ENCODE measurements at regions of chr7 and their contacts with region 1.

Region 1: GRCh38 chr7:98251841-98252639 is at the start of gene TECPR1:
- DNase-seq: peak; percentile 81 to 93 (median 89)
- ATAC-seq: peak; percentile 90
- H3K4me3 ChIP-seq: peak within 1 kb of the TSS; percentile 91
- H3K4me3 Mint-ChIP-seq: peak within 1 kb of the TSS; percentile 88 to 98 (median 94)
- H3K27ac ChIP-seq: peak within 1 kb of the TSS; percentile 83
- H3K27ac Mint-ChIP-seq: peak within 1 kb of the TSS; percentile 90 to 100 (median 99)
- H3K4me1 ChIP-seq: peaks cover 38 to 40% of the 10 kb centered on the region in 2 donors
- H3K4me1 Mint-ChIP-seq: peaks cover 41 to 78% (median 65%) of the 10 kb centered on the region in 7 donors
- H3K27me3 ChIP-seq: no peaks in the 10 kb centered on the region
- H3K27me3 Mint-ChIP-seq: no peaks in the 10 kb centered on the region
- total RNA-seq, gene TECPR1: 82.4 to 203 (median 134) TPM

Region 2: DNA sequence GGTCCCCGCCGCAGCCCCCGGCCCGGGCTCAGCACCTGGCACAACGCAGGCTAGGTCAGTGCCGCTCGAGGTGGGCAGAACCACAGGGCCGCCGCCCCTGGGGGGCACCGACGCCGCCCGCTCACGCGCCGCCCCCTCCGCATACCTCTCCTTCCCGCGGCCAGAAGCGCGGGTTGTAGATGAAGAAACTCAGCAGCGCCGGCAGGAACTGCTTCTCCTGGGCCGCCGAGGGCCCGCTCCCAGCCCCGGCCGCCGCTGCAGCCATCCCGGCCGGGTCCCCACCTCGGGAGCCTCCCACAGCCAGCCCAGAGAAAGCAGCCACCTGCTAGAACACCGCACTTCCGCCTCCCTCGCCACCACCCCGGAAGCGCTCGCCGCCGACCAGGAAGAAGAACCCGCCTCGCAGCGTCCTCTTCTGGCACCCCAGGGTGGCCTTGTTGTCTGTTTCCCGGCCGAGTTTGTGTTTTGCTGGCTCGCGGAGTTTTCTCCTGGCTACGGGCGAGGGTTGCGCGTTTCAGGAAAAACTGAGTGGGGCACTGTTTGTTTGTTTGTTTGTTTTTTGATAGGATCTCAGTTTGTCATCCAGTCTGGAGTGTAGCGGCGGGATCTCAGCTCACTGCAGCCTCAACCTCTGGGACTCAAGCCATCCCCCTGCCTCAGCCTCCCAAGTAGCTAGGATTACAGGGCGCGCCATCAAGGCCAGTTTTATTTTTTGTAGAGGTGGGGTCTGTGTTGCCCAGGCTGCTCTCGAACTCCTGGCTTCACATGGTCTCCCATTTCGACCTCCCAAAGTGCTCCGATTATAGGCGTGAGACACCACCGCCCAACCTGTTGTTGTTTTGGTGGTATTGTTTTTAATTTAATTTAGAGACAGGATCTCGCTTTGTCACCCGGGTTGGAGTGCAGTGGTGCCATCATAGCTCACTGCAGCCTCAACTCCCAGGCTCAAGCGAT is 279.8 kb before region 1 on chr7:
- CTCF ChIA-PET with region 1: no interaction called
- POLR2A ChIA-PET with region 1: interaction called, 3 read pairs
- intact Hi-C with region 1: loop called (anchors 2 to 5 kb)
- DNase-seq: peak; percentile 68 to 86 (median 83)
- ATAC-seq: peak; percentile 94
- H3K4me3 ChIP-seq: peak overlapping the region; percentile 87
- H3K4me3 Mint-ChIP-seq: peak overlapping the region; percentile 90 to 98 (median 96)
- H3K27ac ChIP-seq: peak overlapping the region; percentile 84
- H3K27ac Mint-ChIP-seq: peak overlapping the region; percentile 94 to 97 (median 96)
- H3K4me1 ChIP-seq: peaks cover 10% of the 10 kb centered on the region in 2 donors
- H3K4me1 Mint-ChIP-seq: peaks cover 5 to 37% (median 17%) of the 10 kb centered on the region in 7 donors
- H3K27me3 ChIP-seq: no peaks in the 10 kb centered on the region
- H3K27me3 Mint-ChIP-seq: peaks cover 0 to 3% (median 0%) of the 10 kb centered on the region in 5 donors

Region 3: DNA sequence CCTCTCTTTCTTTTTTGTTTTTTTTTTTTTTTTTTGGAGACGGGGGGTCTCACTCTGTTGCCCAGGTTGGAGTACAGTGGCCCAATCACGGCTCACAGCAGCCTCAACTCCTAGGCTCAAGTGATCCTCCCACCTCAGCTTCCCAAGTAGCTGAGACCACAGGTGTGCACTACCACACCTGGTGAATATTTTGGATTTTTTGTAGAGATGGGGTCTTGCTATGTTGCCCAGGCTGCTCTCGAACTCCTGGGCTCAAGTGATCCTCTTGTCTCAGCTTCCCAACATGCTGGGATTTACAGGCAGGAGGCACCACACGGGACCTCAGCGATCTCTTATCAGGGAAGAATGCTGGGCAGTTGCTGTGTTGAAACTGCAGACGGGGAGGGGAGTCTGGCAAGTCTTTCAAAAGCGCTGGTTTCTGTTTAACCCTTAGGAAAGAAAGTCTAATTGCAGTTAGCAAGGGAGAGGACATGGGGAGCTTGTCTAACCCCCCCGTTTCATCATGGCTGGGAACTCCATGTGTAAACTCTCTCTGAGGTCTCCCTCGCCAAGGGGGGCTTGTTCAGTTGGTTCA is 185.0 kb before region 1 on chr7:
- CTCF ChIA-PET with region 1: no interaction called
- POLR2A ChIA-PET with region 1: no interaction called
- intact Hi-C with region 1: no loop called
- DNase-seq: no peak
- ATAC-seq: no peak
- H3K4me3 ChIP-seq: no peak overlapping the region
- H3K4me3 Mint-ChIP-seq: no peak overlapping the region
- H3K27ac ChIP-seq: no peak overlapping the region
- H3K27ac Mint-ChIP-seq: no peak overlapping the region
- H3K4me1 ChIP-seq: no peaks in the 10 kb centered on the region
- H3K4me1 Mint-ChIP-seq: no peaks in the 10 kb centered on the region
- H3K27me3 ChIP-seq: no peaks in the 10 kb centered on the region
- H3K27me3 Mint-ChIP-seq: peaks cover 0 to 22% (median 20%) of the 10 kb centered on the region in 5 donors

Region 4: GRCh38 chr7:98106647-98107445 is 145.2 kb before region 1 on chr7 and contains the start of gene LMTK2:
- CTCF ChIA-PET with region 1: interaction called, 3 read pairs
- POLR2A ChIA-PET with region 1: interaction called, 5 read pairs
- intact Hi-C with region 1: loop called (anchors 1 kb)
- DNase-seq: peak; percentile 92 to 100 (median 97)
- ATAC-seq: peak; percentile 100
- H3K4me3 ChIP-seq: peak within 1 kb of the TSS; percentile 66
- H3K4me3 Mint-ChIP-seq: peak within 1 kb of the TSS; percentile 90 to 99 (median 96)
- H3K27ac ChIP-seq: peak within 1 kb of the TSS; percentile 92
- H3K27ac Mint-ChIP-seq: peak within 1 kb of the TSS; percentile 22 to 97 (median 89)
- H3K4me1 ChIP-seq: peaks cover 10 to 26% of the 10 kb centered on the region in 2 donors
- H3K4me1 Mint-ChIP-seq: peaks cover 23 to 51% (median 48%) of the 10 kb centered on the region in 7 donors
- H3K27me3 ChIP-seq: no peaks in the 10 kb centered on the region
- H3K27me3 Mint-ChIP-seq: peaks cover 0 to 12% (median 7%) of the 10 kb centered on the region in 5 donors
- total RNA-seq, gene LMTK2: 13.2 to 29.1 (median 25.9) TPM

Region 5: GRCh38 chr7:98211221-98211675 is 40.8 kb before region 1 on chr7 and contains the start of gene BHLHA15:
- CTCF ChIA-PET with region 1: interaction called, 3 read pairs
- POLR2A ChIA-PET with region 1: interaction called, 14 read pairs
- intact Hi-C with region 1: loop called in 1 of 2 experiments (anchors 2 kb)
- DNase-seq: peak in 1 of 9 donors; percentile 48
- ATAC-seq: no peak
- H3K4me3 ChIP-seq: no peak within 1 kb of the TSS
- H3K4me3 Mint-ChIP-seq: peak within 1 kb of the TSS; percentile 48 to 79 (median 64)
- H3K27ac ChIP-seq: no peak within 1 kb of the TSS
- H3K27ac Mint-ChIP-seq: peak within 1 kb of the TSS in 5 of 9 donors; percentile 25 to 84 (median 58)
- H3K4me1 ChIP-seq: peaks cover 0 to 5% of the 10 kb centered on the region in 2 donors
- H3K4me1 Mint-ChIP-seq: peaks cover 0 to 14% (median 5%) of the 10 kb centered on the region in 7 donors
- H3K27me3 ChIP-seq: no peaks in the 10 kb centered on the region
- H3K27me3 Mint-ChIP-seq: peaks cover 0 to 3% (median 0%) of the 10 kb centered on the region in 5 donors
- total RNA-seq, gene BHLHA15: 0.39 to 0.80 TPM in 2 of 5 experiments, not detected in the others

Region 6: DNA sequence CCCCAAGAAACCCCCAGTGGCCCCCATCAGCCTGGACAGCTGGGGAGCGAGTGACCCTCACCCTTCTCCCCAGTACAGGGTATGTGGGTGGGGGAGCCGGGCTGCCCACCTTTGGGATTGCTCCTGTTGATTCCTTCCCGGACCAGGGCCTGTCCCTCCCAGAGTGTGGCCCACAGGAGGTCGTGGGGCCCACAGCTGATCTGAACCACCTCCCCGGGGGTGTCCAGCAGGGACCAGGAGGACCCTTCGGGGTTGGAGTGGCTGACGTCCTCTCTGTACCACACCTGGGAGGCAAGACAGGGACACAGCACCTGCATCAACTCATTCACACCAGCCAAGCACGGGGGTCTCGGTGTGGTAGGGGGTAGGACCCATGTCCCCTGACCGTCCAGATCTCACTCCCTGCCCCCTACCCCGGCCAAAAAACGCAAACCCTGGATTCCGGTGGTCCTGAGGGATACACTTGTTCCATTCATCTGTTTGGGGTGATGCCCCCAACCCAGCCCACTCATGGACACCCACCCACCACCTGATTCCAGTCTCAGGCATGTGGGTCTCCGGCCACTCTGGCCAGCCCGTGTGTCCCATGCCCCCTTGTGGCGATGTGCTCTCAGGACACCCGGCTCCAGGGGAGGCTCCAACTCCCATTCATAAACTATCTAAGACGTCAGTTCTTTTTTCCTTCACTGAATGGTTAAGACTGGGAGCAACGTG is 10.9 kb before region 1 on chr7:
- CTCF ChIA-PET with region 1: no interaction called
- POLR2A ChIA-PET with region 1: interaction called, 22 read pairs
- intact Hi-C with region 1: loop called in 1 of 2 experiments (anchors 1 kb)
- DNase-seq: peak in 4 of 9 donors; percentile 17 to 30 (median 26)
- ATAC-seq: peak; percentile 56
- H3K4me3 ChIP-seq: no peak overlapping the region
- H3K4me3 Mint-ChIP-seq: no peak overlapping the region
- H3K27ac ChIP-seq: no peak overlapping the region
- H3K27ac Mint-ChIP-seq: peak overlapping the region in 5 of 9 donors; percentile 9 to 81 (median 43)
- H3K4me1 ChIP-seq: peaks cover 0 to 8% of the 10 kb centered on the region in 2 donors
- H3K4me1 Mint-ChIP-seq: peaks cover 0 to 20% (median 6%) of the 10 kb centered on the region in 7 donors
- H3K27me3 ChIP-seq: no peaks in the 10 kb centered on the region
- H3K27me3 Mint-ChIP-seq: no peaks in the 10 kb centered on the region

Region 7: DNA sequence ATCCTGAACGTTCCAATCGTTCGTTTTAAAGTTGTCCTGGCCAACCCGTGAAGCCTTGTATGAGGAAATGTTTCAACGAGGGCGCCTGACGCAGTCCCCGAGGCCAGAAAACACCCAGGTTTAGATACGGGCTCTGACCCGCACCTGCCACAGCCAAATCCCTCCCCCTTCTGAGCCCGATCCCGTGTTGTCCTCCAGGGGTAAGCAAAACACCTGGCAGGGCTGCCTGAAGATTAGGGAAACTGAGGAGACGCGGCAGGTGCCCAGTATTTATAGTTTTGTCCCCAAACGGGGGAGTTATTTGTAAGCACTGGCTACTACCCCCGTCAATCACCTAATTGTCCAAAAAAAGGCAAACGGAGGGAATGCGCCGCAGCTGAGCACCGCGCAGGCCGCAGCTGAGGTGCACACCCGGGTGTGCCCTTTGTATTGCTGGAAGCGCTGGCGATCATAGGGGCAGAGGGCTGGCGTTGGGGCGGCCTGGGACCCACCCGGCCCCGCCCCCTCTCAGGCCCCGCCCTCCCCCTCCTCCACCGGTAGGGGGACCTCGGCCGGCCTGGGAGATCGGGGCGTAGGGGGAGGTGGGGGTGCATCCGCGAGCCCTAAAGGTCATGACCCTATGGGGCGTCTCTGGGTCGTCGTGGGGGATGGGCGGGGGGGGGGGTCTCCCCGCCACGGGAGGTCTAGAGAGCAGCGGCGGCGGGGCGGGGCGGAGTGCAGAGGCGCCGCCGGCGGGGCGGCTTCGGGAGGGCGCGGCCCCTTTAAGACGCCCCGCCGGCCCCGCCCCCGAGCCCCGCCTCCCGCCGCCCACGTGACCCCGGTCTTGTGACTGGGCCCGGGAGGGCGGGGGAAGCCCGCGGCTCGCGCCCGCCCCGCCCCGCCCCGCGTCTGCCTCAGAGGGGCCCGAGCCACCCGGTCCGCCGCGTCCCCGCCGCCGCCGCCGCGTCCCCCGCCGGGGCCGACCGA is 29.0 kb after region 1 on chr7 and contains the start of gene BRI3:
- CTCF ChIA-PET with region 1: interaction called, 3 read pairs
- POLR2A ChIA-PET with region 1: interaction called, 106 read pairs
- intact Hi-C with region 1: loop called (anchors 1 kb)
- DNase-seq: peak; percentile 73 to 93 (median 85)
- ATAC-seq: peak; percentile 87
- H3K4me3 ChIP-seq: peak within 1 kb of the TSS; percentile 96
- H3K4me3 Mint-ChIP-seq: peak within 1 kb of the TSS; percentile 85 to 91 (median 88)
- H3K27ac ChIP-seq: peak within 1 kb of the TSS; percentile 92
- H3K27ac Mint-ChIP-seq: peak within 1 kb of the TSS; percentile 83 to 94 (median 88)
- H3K4me1 ChIP-seq: peaks cover 10 to 30% of the 10 kb centered on the region in 2 donors
- H3K4me1 Mint-ChIP-seq: peaks cover 20 to 40% (median 30%) of the 10 kb centered on the region in 7 donors
- H3K27me3 ChIP-seq: no peaks in the 10 kb centered on the region
- H3K27me3 Mint-ChIP-seq: no peaks in the 10 kb centered on the region
- total RNA-seq, gene BRI3: 73.1 to 194 (median 86.5) TPM

Region 8: GRCh38 chr7:98878365-98879165 is 626.5 kb after region 1 on chr7 and contains the start of gene TRRAP:
- CTCF ChIA-PET with region 1: no interaction called
- POLR2A ChIA-PET with region 1: interaction called, 5 read pairs
- intact Hi-C with region 1: loop called (anchors 1 kb)
- DNase-seq: peak; percentile 63 to 87 (median 82)
- ATAC-seq: peak; percentile 82
- H3K4me3 ChIP-seq: peak within 1 kb of the TSS; percentile 95
- H3K4me3 Mint-ChIP-seq: peak within 1 kb of the TSS; percentile 90 to 99 (median 95)
- H3K27ac ChIP-seq: peak within 1 kb of the TSS; percentile 88
- H3K27ac Mint-ChIP-seq: peak within 1 kb of the TSS; percentile 87 to 98 (median 94)
- H3K4me1 ChIP-seq: peaks cover 9 to 14% of the 10 kb centered on the region in 2 donors
- H3K4me1 Mint-ChIP-seq: peaks cover 0 to 37% (median 26%) of the 10 kb centered on the region in 7 donors
- H3K27me3 ChIP-seq: no peaks in the 10 kb centered on the region
- H3K27me3 Mint-ChIP-seq: peaks cover 0 to 3% (median 0%) of the 10 kb centered on the region in 5 donors
- total RNA-seq, gene TRRAP: 59.1 to 72.3 (median 66.8) TPM